Activated naive CD4-positive, alpha-beta T cell treated with anti-CD3 and anti-CD28 coated beads for 36 hours (primary cell): ENCODE measurements at regions of chr5 and their contacts with region 1.

Region 1: DNA sequence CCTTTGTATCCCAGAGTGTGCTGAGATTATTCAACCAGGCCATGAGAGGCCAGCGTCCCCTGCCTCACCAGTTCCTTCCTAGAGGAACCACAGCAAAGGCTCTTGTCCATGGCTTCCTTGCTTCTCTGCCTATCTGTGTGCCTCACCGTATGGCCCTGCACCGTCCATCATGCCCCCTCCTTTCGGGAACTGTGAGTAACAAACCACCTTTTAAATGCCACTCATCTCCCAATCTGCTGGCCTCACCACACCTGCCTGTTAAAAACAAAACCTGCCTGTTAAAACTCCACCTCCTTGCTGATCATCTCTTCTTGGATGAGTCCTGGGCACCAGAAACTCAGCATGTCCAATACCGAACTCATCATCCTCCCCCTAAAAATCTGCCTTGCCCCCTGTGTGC is 4.4 kb upstream of the OR2Y1 start:
- DNase-seq: no peak
- H3K4me3 Mint-ChIP-seq: no peak overlapping the region
- H3K27ac Mint-ChIP-seq: no peak overlapping the region
- H3K4me1 Mint-ChIP-seq: no peaks in the 10 kb centered on the region
- H3K27me3 Mint-ChIP-seq: peaks cover 5% of the 10 kb centered on the region

Region 2: DNA sequence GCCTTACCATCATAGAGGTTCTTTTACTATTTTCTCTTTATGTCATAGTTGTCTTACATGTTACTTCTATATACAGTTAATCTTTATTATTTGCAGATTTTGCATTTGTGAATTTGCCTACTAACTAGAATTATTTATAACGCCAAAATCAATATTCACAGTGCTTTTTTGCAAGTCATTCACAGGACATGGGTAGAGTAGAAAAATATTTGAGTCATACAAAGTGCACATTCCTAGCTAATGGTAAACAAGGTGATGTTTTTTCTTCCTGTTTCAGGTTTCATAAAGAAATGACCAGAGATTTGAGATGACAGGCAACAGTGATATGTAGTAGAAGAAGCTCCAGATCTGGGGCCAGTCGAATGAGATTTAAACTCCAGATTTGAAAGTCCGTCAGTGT is 25.6 kb after region 1 on chr5:
- CTCF ChIA-PET with region 1: interaction called, 3 read pairs
- intact Hi-C with region 1: loop called (anchors 1 kb)
- DNase-seq: no peak
- H3K4me3 Mint-ChIP-seq: no peak overlapping the region
- H3K27ac Mint-ChIP-seq: no peak overlapping the region
- H3K4me1 Mint-ChIP-seq: no peaks in the 10 kb centered on the region
- H3K27me3 Mint-ChIP-seq: peaks cover 20% of the 10 kb centered on the region